B cell (primary cell): ENCODE measurements at regions of chr3 and their contacts with region 1.

Region 1: DNA sequence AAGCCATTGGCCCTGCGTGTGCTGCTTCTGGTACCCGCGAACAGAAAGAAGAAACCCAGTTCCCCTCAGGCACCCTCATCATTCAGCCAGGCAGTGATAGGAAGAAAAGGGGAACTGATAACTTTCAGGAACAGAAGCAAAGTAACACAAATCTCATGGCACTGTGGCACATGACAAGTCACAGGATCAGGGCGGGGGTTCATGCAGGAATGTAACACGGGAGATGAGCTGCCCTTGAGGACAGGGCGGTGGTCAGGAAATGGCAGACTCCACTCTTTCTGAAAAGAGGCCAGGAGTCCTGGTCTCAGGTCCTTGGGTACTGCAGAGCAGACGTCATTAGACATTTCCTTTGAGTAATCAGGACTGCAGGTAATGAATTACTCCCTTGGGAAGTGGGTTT is 95.5 kb downstream of the CCNL1 start:
- DNase-seq: peak; percentile 75
- ATAC-seq: peak; percentile 72
- H3K4me3 ChIP-seq: peak overlapping the region in 1 of 5 experiments; percentile 6
- H3K4me3 Mint-ChIP-seq: peak overlapping the region; percentile 18
- H3K27ac ChIP-seq: no peak overlapping the region
- H3K27ac Mint-ChIP-seq: peak overlapping the region; percentile 10
- H3K4me1 ChIP-seq: peaks cover 27 to 40% of the 10 kb centered on the region in 2 donors
- H3K4me1 Mint-ChIP-seq: peaks cover 32% of the 10 kb centered on the region
- H3K27me3 ChIP-seq: no peaks in the 10 kb centered on the region
- H3K27me3 Mint-ChIP-seq: no peaks in the 10 kb centered on the region
- CTCF ChIP-seq: no peak

Region 2: GRCh38 chr3:157029365-157029790 is 35.0 kb before region 1 on chr3:
- CTCF ChIA-PET with region 1: no interaction called
- POLR2A ChIA-PET with region 1: no interaction called
- intact Hi-C with region 1: loop called (anchors 5 kb)
- DNase-seq: peak; percentile 85
- ATAC-seq: peak; percentile 93
- H3K4me3 ChIP-seq: no peak overlapping the region
- H3K4me3 Mint-ChIP-seq: peak overlapping the region; percentile 44
- H3K27ac ChIP-seq: peak overlapping the region in 1 of 2 donors; percentile 17
- H3K27ac Mint-ChIP-seq: peak overlapping the region; percentile 72
- H3K4me1 ChIP-seq: peaks cover 14 to 26% of the 10 kb centered on the region in 2 donors
- H3K4me1 Mint-ChIP-seq: peaks cover 28% of the 10 kb centered on the region
- H3K27me3 ChIP-seq: no peaks in the 10 kb centered on the region
- H3K27me3 Mint-ChIP-seq: no peaks in the 10 kb centered on the region
- CTCF ChIP-seq: no peak